PC-9 (cell line): ENCODE measurements at regions of chr10 and their contacts with region 1.

Region 1: GRCh38 chr10:14397066-14397465 is 66.3 kb upstream of the FRMD4A start:
- DNase-seq: peak; percentile 73 to 81
- H3K4me3 ChIP-seq: no peak overlapping the region
- H3K27ac ChIP-seq: no peak overlapping the region
- H3K4me1 ChIP-seq: 0 out of 2 replicates have a peak, but pooled peaks cover 4% of the 10 kb centered on the region
- H3K27me3 ChIP-seq: peaks cover 25% of the 10 kb centered on the region
- CTCF ChIP-seq: no peak

Region 2: GRCh38 chr10:14385596-14386593 is 11.2 kb before region 1 on chr10:
- CTCF ChIA-PET with region 1: interaction called, 19 read pairs
- POLR2A ChIA-PET with region 1: interaction called, 10 read pairs
- intact Hi-C with region 1: no loop called
- DNase-seq: peak; percentile 63 to 73
- H3K4me3 ChIP-seq: peak overlapping the region; percentile 25; the same call in 1 of the 2 replicates
- H3K27ac ChIP-seq: no peak overlapping the region; the same call in 1 of the 2 replicates
- H3K4me1 ChIP-seq: no peaks in the 10 kb centered on the region
- H3K27me3 ChIP-seq: peaks cover 20% of the 10 kb centered on the region; the same call in 1 of the 2 replicates
- CTCF ChIP-seq: peak; percentile 39; the same call in 1 of the 2 replicates

Region 3: GRCh38 chr10:14416308-14416700 is 19.2 kb after region 1 on chr10:
- CTCF ChIA-PET with region 1: interaction called, 6 read pairs
- POLR2A ChIA-PET with region 1: interaction called, 11 read pairs
- intact Hi-C with region 1: no loop called
- DNase-seq: peak in 1 of 2 experiments; percentile 44
- H3K4me3 ChIP-seq: no peak overlapping the region
- H3K27ac ChIP-seq: no peak overlapping the region
- H3K4me1 ChIP-seq: no peaks in the 10 kb centered on the region
- H3K27me3 ChIP-seq: 0 out of 2 replicates have a peak, but pooled peaks cover under 1% of the 10 kb centered on the region
- CTCF ChIP-seq: no peak